CD4-positive, alpha-beta memory T cell (primary cell): ENCODE measurements at regions of chr3 and their contacts with region 1.

Region 1: GRCh38 chr3:188554404-188554803 is 400.4 kb downstream of the LPP start:
- DNase-seq: no peak
- H3K4me3 ChIP-seq: no peak overlapping the region
- H3K4me3 Mint-ChIP-seq: no peak overlapping the region
- H3K27ac ChIP-seq: no peak overlapping the region
- H3K27ac Mint-ChIP-seq: no peak overlapping the region
- H3K4me1 ChIP-seq: peaks cover 20% of the 10 kb centered on the region
- H3K4me1 Mint-ChIP-seq: peaks cover 0 to 29% (median 21%) of the 10 kb centered on the region in 4 donors
- H3K27me3 ChIP-seq: no peaks in the 10 kb centered on the region
- H3K27me3 Mint-ChIP-seq: no peaks in the 10 kb centered on the region

Region 2: DNA sequence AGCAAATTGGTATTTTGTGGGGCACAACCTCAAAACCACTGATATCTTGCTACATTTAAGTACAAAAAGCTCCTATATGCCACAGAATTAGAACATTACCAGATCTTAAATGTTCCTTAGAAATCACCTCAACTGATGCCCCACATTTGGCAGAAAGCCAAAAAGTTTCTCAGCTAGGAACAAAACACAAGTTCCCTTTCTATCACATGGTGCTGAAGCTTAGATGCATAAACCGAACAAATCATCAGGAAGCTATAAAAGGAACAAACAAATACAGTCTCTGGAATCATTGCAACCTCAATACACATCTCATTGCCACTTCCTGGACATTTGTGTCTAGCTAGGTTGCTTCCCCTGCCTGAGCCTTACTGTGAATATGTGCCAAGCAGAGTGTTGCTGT is 92.2 kb after region 1 on chr3:
- CTCF ChIA-PET with region 1: no interaction called
- POLR2A ChIA-PET with region 1: no interaction called
- intact Hi-C with region 1: loop called (anchors 10 kb)
- DNase-seq: no peak
- H3K4me3 ChIP-seq: no peak overlapping the region
- H3K4me3 Mint-ChIP-seq: no peak overlapping the region
- H3K27ac ChIP-seq: no peak overlapping the region
- H3K27ac Mint-ChIP-seq: no peak overlapping the region
- H3K4me1 ChIP-seq: no peaks in the 10 kb centered on the region
- H3K4me1 Mint-ChIP-seq: peaks cover 1 to 5% (median 3%) of the 10 kb centered on the region in 4 donors
- H3K27me3 ChIP-seq: no peaks in the 10 kb centered on the region
- H3K27me3 Mint-ChIP-seq: no peaks in the 10 kb centered on the region